ENCODE measurements at regions of chr7 and their contacts with region 1.

Region 1: GRCh38 chr7:24812310-24812945 is 55.2 kb upstream of the GSDME start:
- DNase-seq: peak; percentile 55
- H3K4me3 Mint-ChIP-seq: no peak overlapping the region
- H3K27ac Mint-ChIP-seq: peak overlapping the region; percentile 44
- H3K4me1 Mint-ChIP-seq: no peaks in the 10 kb centered on the region
- H3K27me3 Mint-ChIP-seq: no peaks in the 10 kb centered on the region

Region 2: GRCh38 chr7:24701261-24702235 is 110.9 kb before region 1 on chr7:
- CTCF ChIA-PET with region 1: no interaction called
- POLR2A ChIA-PET with region 1: no interaction called
- DNase-seq: no peak
- H3K4me3 Mint-ChIP-seq: no peak overlapping the region
- H3K27ac Mint-ChIP-seq: no peak overlapping the region
- H3K4me1 Mint-ChIP-seq: peaks cover 7% of the 10 kb centered on the region
- H3K27me3 Mint-ChIP-seq: no peaks in the 10 kb centered on the region

Region 3: GRCh38 chr7:24800667-24801066 is 11.8 kb before region 1 on chr7:
- CTCF ChIA-PET with region 1: interaction called, 16 read pairs
- POLR2A ChIA-PET with region 1: no interaction called
- DNase-seq: no peak
- H3K4me3 Mint-ChIP-seq: no peak overlapping the region
- H3K27ac Mint-ChIP-seq: peak overlapping the region; percentile 64
- H3K4me1 Mint-ChIP-seq: peaks cover 14% of the 10 kb centered on the region
- H3K27me3 Mint-ChIP-seq: no peaks in the 10 kb centered on the region

Region 4: GRCh38 chr7:24825931-24826661 is 13.7 kb after region 1 on chr7:
- CTCF ChIA-PET with region 1: interaction called, 29 read pairs
- POLR2A ChIA-PET with region 1: interaction called, 4 read pairs
- DNase-seq: peak; percentile 26
- H3K4me3 Mint-ChIP-seq: peak overlapping the region; percentile 43
- H3K27ac Mint-ChIP-seq: peak overlapping the region; percentile 87
- H3K4me1 Mint-ChIP-seq: peaks cover 83% of the 10 kb centered on the region
- H3K27me3 Mint-ChIP-seq: no peaks in the 10 kb centered on the region

Region 5: DNA sequence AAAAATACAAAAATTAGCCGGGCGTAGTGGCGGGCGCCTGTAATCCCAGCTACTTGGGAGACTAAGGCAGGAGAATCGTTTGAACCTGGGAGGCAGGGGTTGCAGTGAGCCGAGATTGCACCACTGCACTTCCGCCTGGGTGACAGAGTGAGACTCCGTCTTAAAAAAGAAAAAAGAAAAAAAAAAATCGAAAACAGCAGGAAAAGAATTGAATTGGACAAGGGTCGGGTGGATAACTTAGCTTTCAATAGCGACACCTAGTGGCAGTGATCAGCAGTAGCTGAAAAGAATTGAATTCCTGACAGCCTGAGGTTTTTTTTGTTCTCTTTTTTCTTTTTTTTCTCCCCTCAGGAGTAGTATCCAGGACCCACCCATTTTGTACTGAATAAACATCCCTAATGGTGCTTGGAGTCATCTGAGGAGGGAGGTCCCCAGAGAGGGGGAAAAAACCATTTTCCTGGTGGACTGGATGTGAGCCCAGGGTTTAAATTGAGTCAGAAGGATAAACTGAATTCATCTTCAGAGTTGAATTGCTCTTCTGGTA is 257.5 kb after region 1 on chr7:
- CTCF ChIA-PET with region 1: interaction called, 52 read pairs
- POLR2A ChIA-PET with region 1: interaction called, 3 read pairs
- DNase-seq: peak; percentile 47
- H3K4me3 Mint-ChIP-seq: no peak overlapping the region
- H3K27ac Mint-ChIP-seq: no peak overlapping the region
- H3K4me1 Mint-ChIP-seq: peaks cover 16% of the 10 kb centered on the region
- H3K27me3 Mint-ChIP-seq: no peaks in the 10 kb centered on the region

Region 6: GRCh38 chr7:25093268-25093826 is 280.9 kb after region 1 on chr7:
- CTCF ChIA-PET with region 1: interaction called, 86 read pairs
- POLR2A ChIA-PET with region 1: interaction called, 4 read pairs
- DNase-seq: peak; percentile 83
- H3K4me3 Mint-ChIP-seq: no peak overlapping the region
- H3K27ac Mint-ChIP-seq: no peak overlapping the region
- H3K4me1 Mint-ChIP-seq: peaks cover 12% of the 10 kb centered on the region
- H3K27me3 Mint-ChIP-seq: peaks cover 12% of the 10 kb centered on the region

Region 7: GRCh38 chr7:25098096-25099046 is 285.9 kb after region 1 on chr7:
- CTCF ChIA-PET with region 1: interaction called, 86 read pairs
- POLR2A ChIA-PET with region 1: interaction called, 4 read pairs
- DNase-seq: peak; percentile 73
- H3K4me3 Mint-ChIP-seq: no peak overlapping the region
- H3K27ac Mint-ChIP-seq: no peak overlapping the region
- H3K4me1 Mint-ChIP-seq: peaks cover 10% of the 10 kb centered on the region
- H3K27me3 Mint-ChIP-seq: peaks cover 12% of the 10 kb centered on the region

Region 8: GRCh38 chr7:25125137-25125946 is 312.9 kb after region 1 on chr7 and contains the start of gene CYCS:
- CTCF ChIA-PET with region 1: interaction called, 11 read pairs
- POLR2A ChIA-PET with region 1: interaction called, 3 read pairs
- DNase-seq: peak; percentile 100
- H3K4me3 Mint-ChIP-seq: peak within 1 kb of the TSS; percentile 93
- H3K27ac Mint-ChIP-seq: peak within 1 kb of the TSS; percentile 97
- H3K4me1 Mint-ChIP-seq: peaks cover 33% of the 10 kb centered on the region
- H3K27me3 Mint-ChIP-seq: peaks cover 2% of the 10 kb centered on the region
- total RNA-seq, gene CYCS: 108 to 111 TPM

Measured in activated CD4-positive, alpha-beta memory T cell treated with anti-CD3 and anti-CD28 coated beads, Interleukin-2, amount 10 ng/mL, durations not matched to agents 7 days and 5 days (primary cell).